Dendritic cell treated with granulocyte-macrophage colony-stimulating factor and Interleukin-4, amounts not matched to agents 40 ng/mL and 50 ng/mL, for 4 days (primary cell): ENCODE measurements at regions of chr17 and their contacts with region 1.

Region 1: DNA sequence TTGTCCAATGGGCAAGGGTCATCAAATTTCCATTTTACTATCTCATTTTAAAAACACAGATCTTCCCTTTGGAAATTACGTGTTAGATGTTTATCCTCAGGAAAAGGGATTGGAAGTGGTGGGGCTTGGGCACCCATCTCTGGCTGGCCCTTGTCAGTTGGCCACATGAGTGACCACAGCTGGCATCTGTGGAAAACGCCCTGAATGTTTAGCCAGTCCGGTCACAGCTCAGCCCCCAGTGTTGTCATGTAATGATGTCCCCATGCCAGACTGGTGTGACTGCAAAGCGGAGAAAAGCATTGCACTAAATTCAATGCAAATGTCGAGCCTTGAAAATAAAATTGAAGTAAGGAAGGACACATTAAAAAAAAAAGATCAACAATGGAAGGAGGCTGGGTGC is 53.0 kb downstream of the TMC6 start:
- H3K4me3 Mint-ChIP-seq: no peak overlapping the region
- H3K27ac Mint-ChIP-seq: no peak overlapping the region
- H3K4me1 Mint-ChIP-seq: peaks cover 1% of the 10 kb centered on the region
- H3K27me3 Mint-ChIP-seq: no peaks in the 10 kb centered on the region

Region 2: GRCh38 chr17:78019367-78019975 is 56.1 kb before region 1 on chr17:
- intact Hi-C with region 1: loop called (anchors 10 kb)
- H3K4me3 Mint-ChIP-seq: no peak overlapping the region
- H3K27ac Mint-ChIP-seq: no peak overlapping the region
- H3K4me1 Mint-ChIP-seq: peaks cover 11% of the 10 kb centered on the region
- H3K27me3 Mint-ChIP-seq: no peaks in the 10 kb centered on the region